ENCODE measurements at regions of chr19 and their contacts with region 1.

Region 1: DNA sequence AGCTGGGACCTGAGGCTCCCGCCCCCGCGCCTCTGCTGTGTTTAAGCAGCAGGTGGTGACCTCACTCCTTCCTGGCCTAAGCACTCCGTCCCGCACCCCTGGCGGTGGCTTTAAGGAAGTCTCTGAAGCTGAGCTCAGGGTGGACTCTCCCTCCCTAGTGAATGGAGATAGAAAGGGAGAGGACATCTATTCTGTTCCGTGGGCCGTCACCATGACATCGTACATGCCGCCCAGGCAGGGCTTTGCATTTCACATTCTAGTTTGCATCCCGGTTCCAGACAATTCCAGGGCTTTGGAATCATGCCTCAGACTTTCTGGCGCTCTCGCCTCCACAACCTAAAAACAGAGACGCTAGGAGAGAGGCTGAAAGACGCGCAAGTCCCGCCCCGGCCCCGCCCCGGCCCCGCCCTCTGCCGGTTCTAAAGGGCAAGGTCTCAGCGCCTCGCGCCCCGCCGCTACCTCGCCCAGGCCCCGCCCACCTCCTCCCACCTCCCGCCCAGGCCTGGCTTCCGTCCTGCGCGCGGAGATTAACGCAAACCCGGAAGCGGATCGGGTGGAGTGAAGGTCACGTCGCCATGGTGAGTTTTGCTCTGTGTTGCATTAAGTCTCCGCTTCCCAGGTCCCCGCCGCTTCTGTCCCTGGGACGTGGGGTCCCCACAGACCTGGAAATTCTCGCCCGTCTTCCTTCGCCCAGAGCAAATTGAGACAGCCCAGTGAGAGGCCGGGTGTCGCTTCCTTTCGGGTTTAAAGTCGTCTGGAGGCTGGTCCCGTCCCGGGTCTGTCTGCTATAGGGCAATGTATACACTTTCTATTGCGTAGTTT is at the start of gene ZNF808:
- DNase-seq: peak; percentile 99
- ATAC-seq: peak; percentile 89
- H3K4me3 Mint-ChIP-seq: peak within 1 kb of the TSS; percentile 97
- H3K27ac Mint-ChIP-seq: peak within 1 kb of the TSS; percentile 99
- H3K4me1 Mint-ChIP-seq: peaks cover 34% of the 10 kb centered on the region
- H3K27me3 Mint-ChIP-seq: no peaks in the 10 kb centered on the region
- CTCF ChIP-seq: peak; percentile 58; the same call in 1 of the 2 replicates
- total RNA-seq, gene ZNF808: 47.1 to 59.2 TPM (median 49.2 TPM) in 3 replicates

Region 2: DNA sequence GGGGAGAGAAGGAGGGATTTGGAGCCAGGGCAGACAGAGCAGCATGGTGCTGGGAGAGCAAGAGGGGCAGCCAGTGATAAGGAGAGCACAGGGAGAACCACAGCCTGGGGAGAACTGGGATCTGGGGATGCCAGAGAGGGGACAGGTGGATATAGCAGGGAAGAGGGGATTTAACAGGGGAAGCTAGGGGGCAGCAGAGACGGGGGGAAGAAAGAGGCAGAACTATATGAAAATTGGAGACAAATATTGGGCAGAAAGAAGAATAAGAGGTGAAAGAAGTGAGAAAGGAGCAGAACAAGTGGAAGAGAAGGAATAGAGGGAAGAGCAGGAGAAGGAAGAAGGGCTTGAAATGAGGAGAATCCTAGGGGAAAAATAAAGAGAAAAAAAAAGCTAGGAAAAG is 136.2 kb before region 1 on chr19:
- CTCF ChIA-PET with region 1: interaction called, 10 read pairs
- POLR2A ChIA-PET with region 1: no interaction called
- DNase-seq: peak; percentile 24
- ATAC-seq: peak; percentile 82
- H3K4me3 Mint-ChIP-seq: no peak overlapping the region
- H3K27ac Mint-ChIP-seq: no peak overlapping the region
- H3K4me1 Mint-ChIP-seq: no peaks in the 10 kb centered on the region; the same call in 1 of the 2 replicates
- H3K27me3 Mint-ChIP-seq: peaks cover 3% of the 10 kb centered on the region; the same call in 1 of the 2 replicates
- CTCF ChIP-seq: 0 out of 2 replicates have a peak, but pooled peaks have one; percentile 16

Region 3: GRCh38 chr19:52492597-52493470 is 34.5 kb before region 1 on chr19:
- CTCF ChIA-PET with region 1: interaction called, 10 read pairs
- POLR2A ChIA-PET with region 1: no interaction called
- DNase-seq: peak; percentile 97
- ATAC-seq: peak; percentile 96
- H3K4me3 Mint-ChIP-seq: peak overlapping the region; percentile 87
- H3K27ac Mint-ChIP-seq: peak overlapping the region; percentile 92
- H3K4me1 Mint-ChIP-seq: peaks cover 30% of the 10 kb centered on the region
- H3K27me3 Mint-ChIP-seq: peaks cover 37% of the 10 kb centered on the region
- CTCF ChIP-seq: no peak

Region 4: DNA sequence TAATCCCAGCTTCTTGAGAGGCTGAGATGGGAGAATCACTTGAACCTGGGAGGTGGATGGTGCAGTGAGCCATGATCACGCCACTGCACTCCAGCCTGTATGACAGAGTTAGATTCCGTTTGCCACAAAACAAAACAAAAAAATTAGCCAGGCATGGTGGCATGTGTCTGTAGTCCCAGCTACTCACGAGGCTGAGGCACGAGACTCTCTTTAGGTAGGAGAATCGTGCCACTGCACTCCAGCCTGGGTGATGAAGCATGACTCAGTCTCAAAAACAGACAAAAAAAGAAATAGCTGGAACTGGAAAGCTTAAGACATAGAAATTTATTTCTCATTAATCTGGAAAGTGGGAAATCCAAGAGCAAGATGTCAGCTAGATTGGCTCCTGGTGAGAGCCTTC is 20.1 kb before region 1 on chr19:
- CTCF ChIA-PET with region 1: no interaction called
- POLR2A ChIA-PET with region 1: no interaction called
- DNase-seq: no peak
- ATAC-seq: no peak
- H3K4me3 Mint-ChIP-seq: no peak overlapping the region
- H3K27ac Mint-ChIP-seq: no peak overlapping the region
- H3K4me1 Mint-ChIP-seq: no peaks in the 10 kb centered on the region
- H3K27me3 Mint-ChIP-seq: peaks cover 24% of the 10 kb centered on the region
- CTCF ChIP-seq: no peak

Region 5: DNA sequence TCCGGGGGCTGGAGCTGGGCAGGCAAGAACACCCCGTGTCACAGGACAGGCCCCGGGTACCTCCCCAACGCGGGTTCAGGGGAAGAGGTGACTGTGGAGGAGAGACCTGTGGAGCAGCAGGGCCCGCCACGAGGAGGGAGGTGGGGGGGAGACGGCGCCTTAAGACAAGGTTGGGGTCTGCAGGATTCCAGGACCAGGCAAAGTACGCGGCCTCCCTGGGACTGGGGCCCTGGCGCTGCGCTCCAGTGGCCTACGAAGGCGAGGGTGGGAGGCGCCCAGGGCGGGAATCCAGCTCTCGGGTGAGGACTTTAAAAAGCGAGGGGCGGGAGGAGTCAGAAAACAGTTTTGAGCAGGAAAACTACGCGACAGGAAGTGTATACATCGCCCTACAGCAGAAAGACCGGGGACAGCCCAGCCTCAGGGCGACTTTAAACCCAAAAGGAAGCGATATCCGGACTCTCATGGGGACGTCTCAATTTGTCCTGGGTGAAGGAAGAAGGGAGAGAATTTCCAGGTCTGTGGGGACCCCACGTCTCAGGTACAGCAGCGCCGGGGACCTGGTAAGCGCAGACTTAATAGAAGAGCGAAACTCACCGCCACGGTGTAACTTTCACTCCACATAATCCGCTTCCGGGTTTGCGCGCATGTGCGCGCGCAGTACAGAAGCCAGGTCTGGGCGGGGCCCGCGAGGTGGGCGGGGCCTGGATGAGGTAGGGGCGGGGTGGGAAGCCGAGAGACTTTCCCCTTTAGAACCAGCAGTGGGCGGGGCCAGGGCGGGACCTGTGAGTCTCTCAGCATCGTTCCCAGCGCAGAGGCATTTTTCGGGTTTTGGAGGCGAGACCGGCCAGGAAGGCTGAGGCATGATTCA is 110.6 kb after region 1 on chr19 and contains the start of gene ZNF83:
- CTCF ChIA-PET with region 1: no interaction called
- POLR2A ChIA-PET with region 1: no interaction called
- DNase-seq: peak; percentile 100
- ATAC-seq: peak; percentile 90
- H3K4me3 Mint-ChIP-seq: peak within 1 kb of the TSS; percentile 88
- H3K27ac Mint-ChIP-seq: peak within 1 kb of the TSS; percentile 97
- H3K4me1 Mint-ChIP-seq: peaks cover 12% of the 10 kb centered on the region
- H3K27me3 Mint-ChIP-seq: peaks cover 23% of the 10 kb centered on the region
- CTCF ChIP-seq: no peak
- total RNA-seq, gene ZNF83: 32.5 to 36.4 TPM (median 34.1 TPM) in 3 replicates

Measured in WTC11 (cell line).